Activated CD4-positive, alpha-beta T cell treated with anti-CD3 and anti-CD28 coated beads for 36 hours (primary cell): ENCODE measurements at regions of chr12 and their contacts with region 1.

Region 1: DNA sequence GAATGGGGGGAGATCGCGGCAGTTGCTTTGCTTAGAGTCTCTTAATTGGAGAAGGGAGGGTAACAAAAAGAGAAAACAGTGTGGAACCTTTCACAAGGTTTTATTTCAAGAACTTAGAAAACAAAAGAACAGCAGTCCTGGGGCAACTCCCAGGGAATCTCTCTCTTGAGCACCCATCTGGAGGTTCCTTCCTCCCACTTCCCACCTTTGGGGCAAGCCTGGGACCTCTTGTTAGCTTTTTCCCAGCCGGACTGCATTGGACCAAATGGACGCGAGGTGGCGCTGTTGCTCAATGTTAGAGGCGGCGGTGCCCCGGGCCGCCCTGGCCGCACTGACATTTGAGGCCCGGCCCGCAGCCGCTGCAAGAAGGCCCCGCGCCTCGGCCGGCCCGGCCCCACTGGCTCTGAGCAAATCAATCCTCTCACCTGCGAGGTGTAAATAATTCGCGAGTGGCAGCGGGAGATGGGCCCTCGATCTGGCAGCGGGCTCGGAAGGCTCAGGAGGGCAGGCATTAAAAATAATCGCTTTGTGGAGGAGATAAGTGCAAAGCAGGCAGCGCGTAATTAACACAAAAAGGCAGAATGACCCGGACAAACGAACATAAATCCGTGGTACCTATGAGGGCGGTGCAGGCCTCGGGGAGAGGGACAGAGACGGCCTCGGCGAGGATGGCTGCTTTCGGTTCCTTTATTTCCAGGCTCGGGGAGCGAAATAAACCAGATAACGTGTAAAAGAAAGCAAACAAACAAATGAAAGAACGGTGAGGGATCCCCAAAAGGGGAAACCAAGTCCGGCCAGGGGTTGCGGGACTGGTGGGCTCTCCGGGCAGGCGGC is 2.7 kb upstream of the HOXC8 start:
- DNase-seq: peak; percentile 91
- ATAC-seq: peak; percentile 81
- H3K4me3 Mint-ChIP-seq: peak overlapping the region; percentile 46
- H3K27ac Mint-ChIP-seq: no peak overlapping the region
- H3K4me1 Mint-ChIP-seq: peaks cover 29% of the 10 kb centered on the region
- H3K27me3 Mint-ChIP-seq: peaks cover 87% of the 10 kb centered on the region

Region 2: DNA sequence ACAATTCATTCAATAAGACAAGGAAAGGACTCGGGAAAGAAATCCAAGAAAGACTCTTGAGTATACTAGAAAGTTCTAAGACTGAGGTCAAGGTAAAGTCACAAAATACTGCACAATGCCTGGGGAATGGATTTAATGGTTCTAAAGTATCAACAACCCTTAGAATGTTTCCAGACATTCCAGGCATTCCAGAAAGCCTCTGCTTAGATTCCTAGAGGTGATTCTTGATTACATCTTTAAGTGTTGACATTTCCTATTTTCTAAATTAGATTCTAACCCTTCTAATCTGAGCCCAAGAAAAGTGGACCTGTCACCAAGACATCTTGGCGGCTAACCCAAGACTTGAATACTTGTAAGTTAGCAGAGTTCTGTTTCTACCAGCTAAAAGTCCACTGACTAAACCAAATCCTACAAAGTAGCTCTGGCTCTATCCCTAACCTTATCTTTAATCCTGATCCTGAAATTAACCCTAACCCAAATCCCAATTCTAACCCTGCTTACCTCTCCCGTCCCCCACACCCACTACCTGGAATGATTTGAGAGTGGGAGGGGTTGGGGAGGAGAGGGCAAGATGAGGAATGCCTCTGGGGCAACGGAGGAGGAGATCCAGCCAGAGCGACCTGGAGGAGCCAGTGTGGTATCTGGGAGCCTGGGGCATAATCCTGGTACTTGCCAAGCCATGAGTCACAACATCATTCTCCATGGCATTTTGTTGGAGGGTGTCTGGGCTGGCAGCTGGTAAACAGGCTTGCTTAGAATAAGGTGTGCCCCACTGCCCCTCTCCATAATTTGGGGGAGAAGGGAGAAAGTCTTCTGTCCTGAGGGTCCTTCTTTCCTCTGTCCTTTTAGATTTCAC is 160.9 kb before region 1 on chr12:
- CTCF ChIA-PET with region 1: no interaction called
- POLR2A ChIA-PET with region 1: no interaction called
- intact Hi-C with region 1: no loop called
- DNase-seq: no peak
- ATAC-seq: no peak
- H3K4me3 Mint-ChIP-seq: no peak overlapping the region
- H3K27ac Mint-ChIP-seq: no peak overlapping the region
- H3K4me1 Mint-ChIP-seq: no peaks in the 10 kb centered on the region
- H3K27me3 Mint-ChIP-seq: peaks cover 46% of the 10 kb centered on the region

Region 3: GRCh38 chr12:54032627-54033100 is 26.6 kb after region 1 on chr12 and contains the start of gene HOXC5:
- CTCF ChIA-PET with region 1: interaction called, 8 read pairs
- POLR2A ChIA-PET with region 1: no interaction called
- intact Hi-C with region 1: loop called in 1 of 2 experiments (anchors 1 kb)
- DNase-seq: peak; percentile 81
- ATAC-seq: peak; percentile 36
- H3K4me3 Mint-ChIP-seq: peak within 1 kb of the TSS; percentile 28
- H3K27ac Mint-ChIP-seq: no peak within 1 kb of the TSS
- H3K4me1 Mint-ChIP-seq: peaks cover 25% of the 10 kb centered on the region
- H3K27me3 Mint-ChIP-seq: peaks cover 64% of the 10 kb centered on the region
- total RNA-seq, gene HOXC5: not detected

Region 4: DNA sequence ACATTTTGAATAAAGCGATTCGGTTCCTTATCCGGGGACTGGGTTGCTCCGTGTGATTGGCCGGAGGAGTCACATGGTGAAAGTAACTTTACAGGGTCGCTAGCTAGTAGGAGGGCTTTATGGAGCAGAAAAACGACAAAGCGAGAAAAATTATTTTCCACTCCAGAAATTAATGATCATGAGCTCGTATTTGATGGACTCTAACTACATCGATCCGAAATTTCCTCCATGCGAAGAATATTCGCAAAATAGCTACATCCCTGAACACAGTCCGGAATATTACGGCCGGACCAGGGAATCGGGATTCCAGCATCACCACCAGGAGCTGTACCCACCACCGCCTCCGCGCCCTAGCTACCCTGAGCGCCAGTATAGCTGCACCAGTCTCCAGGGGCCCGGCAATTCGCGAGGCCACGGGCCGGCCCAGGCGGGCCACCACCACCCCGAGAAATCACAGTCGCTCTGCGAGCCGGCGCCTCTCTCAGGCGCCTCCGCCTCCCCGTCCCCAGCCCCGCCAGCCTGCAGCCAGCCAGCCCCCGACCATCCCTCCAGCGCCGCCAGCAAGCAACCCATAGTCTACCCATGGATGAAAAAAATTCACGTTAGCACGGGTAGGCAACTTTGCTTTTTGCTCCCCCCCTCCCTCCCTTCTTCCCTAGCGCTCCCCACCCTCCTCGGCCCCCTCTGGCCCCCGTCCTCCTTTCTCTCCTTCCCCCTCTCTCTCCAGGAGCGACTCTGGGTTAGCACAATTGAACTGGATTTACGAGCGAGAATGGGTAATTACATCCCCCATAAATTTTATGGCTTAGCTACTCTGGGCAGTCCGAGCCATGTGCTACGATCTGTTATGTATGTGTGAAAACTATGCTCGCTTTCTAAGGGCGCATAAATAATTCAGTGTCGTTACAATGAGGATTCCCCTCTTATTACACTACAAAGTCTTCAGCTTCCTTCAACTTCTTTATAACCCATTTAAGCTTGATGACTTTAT is 48.0 kb after region 1 on chr12 and contains the start of gene HOXC4:
- CTCF ChIA-PET with region 1: interaction called, 5 read pairs
- POLR2A ChIA-PET with region 1: no interaction called
- intact Hi-C with region 1: loop called (anchors 2 to 5 kb)
- DNase-seq: no peak
- ATAC-seq: no peak
- H3K4me3 Mint-ChIP-seq: peak within 1 kb of the TSS; percentile 0
- H3K27ac Mint-ChIP-seq: no peak within 1 kb of the TSS
- H3K4me1 Mint-ChIP-seq: peaks cover 21% of the 10 kb centered on the region
- H3K27me3 Mint-ChIP-seq: peaks cover 81% of the 10 kb centered on the region
- total RNA-seq, gene HOXC4: not detected

Region 5: DNA sequence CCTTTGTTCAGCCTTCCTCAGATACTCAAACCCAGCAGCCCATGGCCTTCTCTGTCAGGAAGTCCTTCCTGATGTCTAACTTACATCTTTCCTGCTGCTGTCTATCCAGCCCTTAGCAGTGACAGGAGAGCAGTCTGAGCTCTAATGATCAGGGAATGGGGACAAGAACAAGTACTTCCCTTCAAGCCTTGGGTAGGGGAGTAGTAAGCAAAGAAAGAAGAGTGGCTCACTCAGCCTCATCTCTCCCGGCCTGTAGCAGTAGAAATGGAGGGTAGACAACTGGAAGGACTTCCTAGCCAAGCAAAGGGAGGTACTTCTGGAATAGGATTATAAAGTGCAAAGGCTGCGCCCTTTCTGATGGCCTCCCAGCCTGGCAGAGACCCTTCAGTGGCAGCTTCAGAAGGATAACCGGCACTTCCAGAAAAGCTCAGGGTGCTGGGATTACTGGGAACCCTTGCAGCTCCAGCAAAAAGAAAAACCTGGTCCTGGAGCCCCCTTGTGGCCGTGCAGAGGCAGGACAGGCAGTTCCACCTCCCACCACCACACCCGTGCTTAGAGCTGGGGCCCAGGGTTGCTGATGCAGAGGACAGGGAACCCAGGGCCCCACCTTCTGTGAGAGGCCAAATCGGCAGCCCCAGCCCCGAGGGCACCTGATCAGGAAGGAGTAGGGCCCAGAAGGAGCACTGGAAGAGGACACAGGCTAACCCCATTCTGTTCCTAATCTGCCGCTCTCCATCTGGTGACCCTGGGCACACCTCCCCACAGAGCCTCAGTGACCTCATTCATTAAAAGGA is 195.1 kb after region 1 on chr12:
- CTCF ChIA-PET with region 1: interaction called, 71 read pairs
- POLR2A ChIA-PET with region 1: no interaction called
- intact Hi-C with region 1: loop called (anchors 1 kb)
- DNase-seq: peak; percentile 83
- ATAC-seq: peak; percentile 95
- H3K4me3 Mint-ChIP-seq: no peak overlapping the region
- H3K27ac Mint-ChIP-seq: no peak overlapping the region
- H3K4me1 Mint-ChIP-seq: no peaks in the 10 kb centered on the region
- H3K27me3 Mint-ChIP-seq: peaks cover 44% of the 10 kb centered on the region